ENCODE measurements at regions of chr12 and their contacts with region 1.

Region 1: GRCh38 chr12:2284857-2285256 is 232.1 kb downstream of the CACNA1C start:
- DNase-seq: peak in 1 of 2 donors; percentile 88
- H3K4me3 ChIP-seq: no peak overlapping the region
- H3K27ac ChIP-seq: peak overlapping the region; percentile 35 to 77
- H3K4me1 ChIP-seq: peaks cover 9 to 65% of the 10 kb centered on the region in 2 donors
- H3K27me3 ChIP-seq: no peaks in the 10 kb centered on the region
- CTCF ChIP-seq: peak; percentile 53 to 67 (median 57)

Region 2: GRCh38 chr12:2267703-2268501 is 17.0 kb before region 1 on chr12:
- intact Hi-C with region 1: loop called (anchors 2 kb)
- DNase-seq: peak in 1 of 2 donors; percentile 91
- H3K4me3 ChIP-seq: peak overlapping the region; percentile 2 to 4
- H3K27ac ChIP-seq: peak overlapping the region; percentile 84 to 90
- H3K4me1 ChIP-seq: peaks cover 34 to 60% of the 10 kb centered on the region in 2 donors
- H3K27me3 ChIP-seq: no peaks in the 10 kb centered on the region
- CTCF ChIP-seq: no peak

Region 3: GRCh38 chr12:2336409-2336829 is 51.6 kb after region 1 on chr12:
- intact Hi-C with region 1: loop called (anchors 5 kb)
- DNase-seq: peak; percentile 56 to 89
- H3K4me3 ChIP-seq: peak overlapping the region in 1 of 2 donors; percentile 32
- H3K27ac ChIP-seq: peak overlapping the region; percentile 97 to 99
- H3K4me1 ChIP-seq: peaks cover 26 to 73% of the 10 kb centered on the region in 2 donors
- H3K27me3 ChIP-seq: no peaks in the 10 kb centered on the region
- CTCF ChIP-seq: no peak

Region 4: GRCh38 chr12:2387103-2387834 is 102.4 kb after region 1 on chr12:
- intact Hi-C with region 1: loop called (anchors 5 kb)
- DNase-seq: peak in 1 of 2 donors; percentile 65
- H3K4me3 ChIP-seq: no peak overlapping the region
- H3K27ac ChIP-seq: peak overlapping the region; percentile 84 to 91
- H3K4me1 ChIP-seq: peaks cover 13 to 45% of the 10 kb centered on the region in 2 donors
- H3K27me3 ChIP-seq: no peaks in the 10 kb centered on the region
- CTCF ChIP-seq: no peak

Region 5: GRCh38 chr12:2414810-2415567 is 130.1 kb after region 1 on chr12:
- intact Hi-C with region 1: no loop called
- DNase-seq: peak in 1 of 2 donors; percentile 76
- H3K4me3 ChIP-seq: peak overlapping the region in 1 of 2 donors; percentile 5
- H3K27ac ChIP-seq: peak overlapping the region; percentile 64 to 73
- H3K4me1 ChIP-seq: peaks cover 10 to 22% of the 10 kb centered on the region in 2 donors
- H3K27me3 ChIP-seq: no peaks in the 10 kb centered on the region
- CTCF ChIP-seq: peak in 2 of 3 experiments; percentile 24 to 34

Region 6: DNA sequence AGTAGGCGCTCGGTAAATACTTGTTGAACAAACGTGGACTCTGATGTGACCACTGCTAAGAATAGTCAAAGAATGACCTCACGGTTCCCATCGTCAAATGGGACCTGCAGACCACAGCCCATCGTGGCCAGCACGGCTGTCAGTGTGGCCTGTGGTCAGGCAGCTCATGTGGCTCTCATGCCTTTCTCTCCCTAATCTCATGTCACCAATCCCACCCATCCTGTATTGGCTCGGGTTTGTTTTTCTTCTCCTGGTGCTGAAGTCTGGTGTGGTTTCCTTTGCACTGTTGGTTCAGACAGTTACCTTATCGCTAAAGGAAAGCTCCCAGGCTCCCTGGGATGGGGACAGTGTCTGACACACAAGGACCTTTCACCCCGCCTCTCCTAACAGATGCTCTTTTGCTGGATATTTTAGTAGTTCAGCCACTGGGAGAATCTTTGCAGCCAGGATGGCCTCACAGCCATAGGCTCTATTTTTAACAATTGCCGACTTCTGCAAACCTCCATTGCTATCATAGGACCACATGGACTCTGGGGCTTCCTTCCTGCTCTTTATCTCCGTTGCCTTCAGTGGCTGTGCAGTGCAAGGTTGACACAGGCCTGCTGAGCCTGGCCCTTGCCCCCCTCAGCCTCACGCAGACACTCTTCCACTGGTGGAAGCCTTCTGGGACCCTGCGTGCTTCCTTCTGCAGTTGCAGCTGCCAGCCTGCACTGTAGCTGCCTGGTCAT is 216.8 kb after region 1 on chr12:
- intact Hi-C with region 1: no loop called
- DNase-seq: no peak
- H3K4me3 ChIP-seq: no peak overlapping the region
- H3K27ac ChIP-seq: no peak overlapping the region
- H3K4me1 ChIP-seq: no peaks in the 10 kb centered on the region
- H3K27me3 ChIP-seq: no peaks in the 10 kb centered on the region
- CTCF ChIP-seq: no peak

Region 7: DNA sequence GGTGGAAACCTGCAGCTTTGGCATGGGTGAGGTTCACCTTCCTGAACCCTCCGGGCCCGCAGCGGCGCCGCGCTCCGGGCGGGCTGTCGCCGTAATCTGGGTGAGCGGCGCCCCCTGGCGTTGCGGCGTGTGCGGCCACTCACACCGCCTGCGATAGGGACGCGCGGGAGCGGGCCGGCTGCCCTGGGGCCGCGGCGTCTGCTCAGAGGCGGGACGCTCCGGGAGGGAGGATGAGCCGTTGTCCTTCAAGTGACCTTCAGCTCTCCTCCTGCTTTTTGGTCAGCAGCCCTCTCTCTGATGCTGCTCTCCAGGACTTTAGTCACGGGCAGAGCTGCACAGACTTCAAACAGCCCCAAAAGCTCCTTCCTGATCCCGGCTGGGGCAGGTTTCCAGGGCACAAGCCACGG is 298.2 kb after region 1 on chr12:
- intact Hi-C with region 1: loop called (anchors 5 kb)
- DNase-seq: peak in 1 of 2 donors; percentile 77
- H3K4me3 ChIP-seq: peak overlapping the region in 1 of 2 donors; percentile 44
- H3K27ac ChIP-seq: peak overlapping the region in 1 of 2 donors; percentile 38
- H3K4me1 ChIP-seq: peaks cover 0 to 6% of the 10 kb centered on the region in 2 donors
- H3K27me3 ChIP-seq: no peaks in the 10 kb centered on the region
- CTCF ChIP-seq: peak; percentile 86 to 94 (median 94)